ENCODE measurements at regions of chr6 and their contacts with region 1.

Region 1: GRCh38 chr6:33744001-33744848 is 2.5 kb downstream of the IP6K3 start:
- DNase-seq: peak; percentile 70
- ATAC-seq: peak; percentile 61
- H3K4me3 ChIP-seq: no peak overlapping the region
- H3K27ac ChIP-seq: no peak overlapping the region
- H3K4me1 ChIP-seq: peaks cover 22% of the 10 kb centered on the region
- H3K27me3 ChIP-seq: peaks cover 6% of the 10 kb centered on the region; the same call in 1 of the 2 replicates
- CTCF ChIP-seq: peak; percentile 95
- POLR2A ChIP-seq: no peak
- RAD21 ChIP-seq: peak; percentile 91

Region 2: GRCh38 chr6:33761922-33762629 is 17.9 kb after region 1 on chr6:
- CTCF ChIA-PET with region 1: interaction called, 29 read pairs
- POLR2A ChIA-PET with region 1: no interaction called
- dilution Hi-C with region 1: no loop called
- in situ Hi-C with region 1: no loop called
- intact Hi-C with region 1: loop called (anchors 1 kb)
- DNase-seq: peak; percentile 32
- ATAC-seq: peak; percentile 80
- H3K4me3 ChIP-seq: no peak overlapping the region
- H3K27ac ChIP-seq: no peak overlapping the region
- H3K4me1 ChIP-seq: peaks cover 17% of the 10 kb centered on the region; the same call in 1 of the 2 replicates
- H3K27me3 ChIP-seq: no peaks in the 10 kb centered on the region
- CTCF ChIP-seq: peak; percentile 66
- POLR2A ChIP-seq: no peak
- RAD21 ChIP-seq: peak; percentile 70

Region 3: DNA sequence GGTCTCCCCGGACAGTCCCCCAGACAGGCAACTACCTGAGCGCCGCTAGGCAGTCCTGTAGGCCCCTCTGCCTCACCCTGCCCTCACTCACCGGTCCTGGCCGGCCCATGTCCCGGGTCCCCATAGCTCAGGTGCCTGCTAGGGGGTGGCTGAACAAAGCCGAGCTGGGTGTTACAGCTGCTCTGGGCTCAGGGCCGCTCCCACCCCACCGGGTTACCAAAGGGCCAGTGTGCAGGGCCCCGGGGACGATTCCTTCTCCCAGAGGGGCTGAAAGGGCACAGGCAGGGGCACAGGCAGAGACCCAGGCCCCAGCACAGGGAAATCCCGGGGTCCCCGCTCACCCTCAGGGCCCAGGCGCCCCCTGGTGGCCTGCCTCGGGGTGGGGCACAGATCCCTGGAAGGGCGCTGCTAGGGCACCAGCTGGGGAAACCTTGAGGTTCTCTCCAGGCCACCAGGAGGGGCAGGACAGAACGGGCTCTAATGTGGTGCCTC is 283.3 kb after region 1 on chr6:
- CTCF ChIA-PET with region 1: interaction called, 10 read pairs
- POLR2A ChIA-PET with region 1: no interaction called
- dilution Hi-C with region 1: no loop called
- in situ Hi-C with region 1: no loop called
- intact Hi-C with region 1: loop called (anchors 1 kb)
- DNase-seq: peak; percentile 3
- ATAC-seq: peak; percentile 85
- H3K4me3 ChIP-seq: no peak overlapping the region
- H3K27ac ChIP-seq: no peak overlapping the region
- H3K4me1 ChIP-seq: no peaks in the 10 kb centered on the region
- H3K27me3 ChIP-seq: peaks cover 54% of the 10 kb centered on the region
- CTCF ChIP-seq: peak; percentile 73
- POLR2A ChIP-seq: no peak; the same call in 1 of the 2 replicates
- RAD21 ChIP-seq: peak; percentile 75